WTC11 (cell line): ENCODE measurements at regions of chr10 and their contacts with region 1.

Region 1: GRCh38 chr10:91467114-91467513 is 57.0 kb downstream of the HECTD2 start:
- DNase-seq: no peak
- ATAC-seq: no peak
- H3K4me3 Mint-ChIP-seq: no peak overlapping the region
- H3K27ac Mint-ChIP-seq: no peak overlapping the region
- H3K4me1 Mint-ChIP-seq: no peaks in the 10 kb centered on the region
- H3K27me3 Mint-ChIP-seq: peaks cover 6% of the 10 kb centered on the region
- CTCF ChIP-seq: no peak

Region 2: DNA sequence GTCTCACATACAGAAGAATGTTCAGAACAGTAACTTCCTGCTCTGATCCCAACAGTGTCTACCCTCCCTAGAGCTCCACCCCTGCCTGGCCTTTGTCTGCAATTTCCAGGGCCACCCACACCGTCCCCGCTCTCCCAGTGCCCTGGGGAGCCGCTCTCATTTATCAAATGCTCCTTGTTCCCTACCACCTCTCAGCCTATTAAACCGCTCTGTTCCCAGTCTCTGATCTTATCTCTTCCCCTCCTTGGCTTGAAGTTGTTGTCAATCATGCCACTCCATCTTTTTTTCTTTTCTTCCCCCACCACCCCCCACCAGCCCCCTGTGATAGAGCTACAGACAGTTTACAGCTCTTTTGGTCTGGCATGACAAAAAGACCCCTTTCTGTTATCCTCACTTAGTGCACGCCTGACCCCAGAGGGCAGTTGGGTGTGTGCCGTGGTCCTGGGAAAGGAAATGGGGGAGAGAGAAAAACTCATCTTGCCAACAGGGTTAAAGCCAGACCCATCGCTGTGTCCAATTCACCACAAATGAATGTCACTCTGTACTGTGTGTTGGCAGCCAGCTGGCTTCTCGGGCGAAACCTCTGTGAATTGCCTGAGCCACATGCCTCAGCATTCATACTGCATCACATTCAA is 85.7 kb before region 1 on chr10:
- CTCF ChIA-PET with region 1: no interaction called
- POLR2A ChIA-PET with region 1: no interaction called
- DNase-seq: no peak
- ATAC-seq: peak; percentile 83
- H3K4me3 Mint-ChIP-seq: no peak overlapping the region
- H3K27ac Mint-ChIP-seq: no peak overlapping the region
- H3K4me1 Mint-ChIP-seq: peaks cover 4% of the 10 kb centered on the region
- H3K27me3 Mint-ChIP-seq: peaks cover 8% of the 10 kb centered on the region; the same call in 1 of the 2 replicates
- CTCF ChIP-seq: no peak

Region 3: GRCh38 chr10:91409869-91410637 is 57.1 kb before region 1 on chr10 and contains the start of gene HECTD2:
- CTCF ChIA-PET with region 1: no interaction called
- POLR2A ChIA-PET with region 1: no interaction called
- DNase-seq: peak; percentile 77
- ATAC-seq: peak; percentile 79
- H3K4me3 Mint-ChIP-seq: peak within 1 kb of the TSS; percentile 93
- H3K27ac Mint-ChIP-seq: peak within 1 kb of the TSS; percentile 98
- H3K4me1 Mint-ChIP-seq: peaks cover 49% of the 10 kb centered on the region
- H3K27me3 Mint-ChIP-seq: peaks cover 4% of the 10 kb centered on the region; the same call in 1 of the 2 replicates
- CTCF ChIP-seq: no peak
- total RNA-seq, gene HECTD2: 6.5 to 9.4 TPM (median 8.5 TPM) in 3 replicates

Region 4: GRCh38 chr10:91434041-91434440 is 33.1 kb before region 1 on chr10:
- CTCF ChIA-PET with region 1: no interaction called
- POLR2A ChIA-PET with region 1: interaction called, 13 read pairs
- DNase-seq: no peak
- ATAC-seq: no peak
- H3K4me3 Mint-ChIP-seq: no peak overlapping the region
- H3K27ac Mint-ChIP-seq: no peak overlapping the region
- H3K4me1 Mint-ChIP-seq: no peaks in the 10 kb centered on the region
- H3K27me3 Mint-ChIP-seq: no peaks in the 10 kb centered on the region
- CTCF ChIP-seq: no peak

Region 5: DNA sequence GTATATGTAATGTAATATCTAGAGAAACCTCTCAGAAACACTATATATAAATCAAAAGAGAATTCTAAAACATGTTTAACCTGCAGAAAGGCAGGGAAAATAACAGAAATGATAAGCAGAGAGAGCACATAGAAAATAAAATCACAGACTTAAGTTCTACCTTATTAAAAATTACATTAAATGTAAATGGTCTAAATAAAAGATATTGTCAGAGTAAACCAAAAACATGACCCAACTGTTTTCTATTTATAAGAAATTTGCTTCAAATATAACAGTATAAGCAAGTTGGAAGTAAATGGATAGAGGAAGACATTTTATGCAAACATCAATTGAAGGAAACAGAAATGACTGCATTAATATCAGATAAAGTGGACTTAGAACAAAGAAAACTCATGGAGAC is 13.6 kb before region 1 on chr10:
- CTCF ChIA-PET with region 1: no interaction called
- POLR2A ChIA-PET with region 1: no interaction called
- DNase-seq: no peak
- ATAC-seq: no peak
- H3K4me3 Mint-ChIP-seq: no peak overlapping the region
- H3K27ac Mint-ChIP-seq: no peak overlapping the region
- H3K4me1 Mint-ChIP-seq: no peaks in the 10 kb centered on the region
- H3K27me3 Mint-ChIP-seq: no peaks in the 10 kb centered on the region
- CTCF ChIP-seq: no peak